A549 (cell line): ENCODE measurements at regions of chr12 and their contacts with region 1.

Region 1: GRCh38 chr12:113196996-113197395 is 11.5 kb downstream of the RITA1 start:
- DNase-seq: peak; percentile 84 to 94
- ATAC-seq: peak; percentile 91
- H3K4me3 ChIP-seq: no peak overlapping the region
- H3K27ac ChIP-seq: peak overlapping the region in 1 of 2 experiments; percentile 83; a peak in 3 of 6 replicates
- H3K4me1 ChIP-seq: peaks cover 27% of the 10 kb centered on the region
- CTCF ChIP-seq: peak; percentile 84
- EP300 ChIP-seq: no peak
- POLR2A ChIP-seq: no peak
- RAD21 ChIP-seq: peak; percentile 79 to 82

Region 2: GRCh38 chr12:113184900-113185773 is 11.9 kb before region 1 on chr12 and contains the starts of genes DDX54 and RITA1:
- CTCF ChIA-PET with region 1: interaction called, 11 read pairs
- POLR2A ChIA-PET with region 1: interaction called, 12 read pairs
- DNase-seq: peak; percentile 90 to 93
- ATAC-seq: peak; percentile 94
- H3K4me3 ChIP-seq: peak within 1 kb of the TSS; percentile 89
- H3K27ac ChIP-seq: peak within 1 kb of the TSS; percentile 96 to 98
- H3K4me1 ChIP-seq: peaks cover 20% of the 10 kb centered on the region
- CTCF ChIP-seq: no peak
- EP300 ChIP-seq: no peak
- POLR2A ChIP-seq: peak; percentile 78; the same call in 1 of the 2 replicates
- RAD21 ChIP-seq: no peak
- polyA plus RNA-seq, gene DDX54: 60.6 and 62.4 TPM in 2 replicates
- polyA plus RNA-seq, gene RITA1: 16.7 and 18.6 TPM in 2 replicates

Region 3: GRCh38 chr12:113221181-113221997 is 24.4 kb after region 1 on chr12 and contains the start of gene TPCN1:
- CTCF ChIA-PET with region 1: interaction called, 35 read pairs
- POLR2A ChIA-PET with region 1: interaction called, 10 read pairs
- DNase-seq: peak; percentile 98 to 100
- ATAC-seq: peak; percentile 93 to 96
- H3K4me3 ChIP-seq: peak within 1 kb of the TSS; percentile 67
- H3K27ac ChIP-seq: peak within 1 kb of the TSS; percentile 80 to 93
- H3K4me1 ChIP-seq: peaks cover 20% of the 10 kb centered on the region
- CTCF ChIP-seq: no peak
- EP300 ChIP-seq: no peak
- POLR2A ChIP-seq: peak; percentile 98
- RAD21 ChIP-seq: no peak
- polyA plus RNA-seq, gene TPCN1: 24.1 and 28.7 TPM in 2 replicates

Region 4: GRCh38 chr12:113242026-113242418 is 45.0 kb after region 1 on chr12:
- CTCF ChIA-PET with region 1: interaction called, 4 read pairs
- POLR2A ChIA-PET with region 1: interaction called, 11 read pairs
- DNase-seq: no peak
- ATAC-seq: no peak
- H3K4me3 ChIP-seq: no peak overlapping the region
- H3K27ac ChIP-seq: peak overlapping the region in 1 of 2 experiments; percentile 62; a peak in 2 of 6 replicates
- H3K4me1 ChIP-seq: peaks cover 42% of the 10 kb centered on the region
- CTCF ChIP-seq: no peak
- EP300 ChIP-seq: no peak
- POLR2A ChIP-seq: no peak
- RAD21 ChIP-seq: no peak

Region 5: GRCh38 chr12:113252456-113252855 is 55.5 kb after region 1 on chr12:
- CTCF ChIA-PET with region 1: no interaction called
- POLR2A ChIA-PET with region 1: no interaction called
- DNase-seq: no peak
- ATAC-seq: no peak
- H3K4me3 ChIP-seq: no peak overlapping the region
- H3K27ac ChIP-seq: no peak overlapping the region
- H3K4me1 ChIP-seq: no peaks in the 10 kb centered on the region
- CTCF ChIP-seq: no peak
- EP300 ChIP-seq: no peak
- POLR2A ChIP-seq: no peak
- RAD21 ChIP-seq: no peak

Region 6: GRCh38 chr12:113582521-113583218 is 385.7 kb after region 1 on chr12:
- CTCF ChIA-PET with region 1: no interaction called
- POLR2A ChIA-PET with region 1: no interaction called
- DNase-seq: no peak
- ATAC-seq: no peak
- H3K4me3 ChIP-seq: no peak overlapping the region
- H3K27ac ChIP-seq: no peak overlapping the region
- H3K4me1 ChIP-seq: no peaks in the 10 kb centered on the region
- CTCF ChIP-seq: no peak
- EP300 ChIP-seq: no peak
- POLR2A ChIP-seq: no peak
- RAD21 ChIP-seq: no peak